ENCODE measurements at regions of chr4 and their contacts with region 1.

Region 1: GRCh38 chr4:75555294-75556164 is at the start of gene ODAPH:
- DNase-seq: no peak
- H3K4me3 ChIP-seq: no peak within 1 kb of the TSS
- H3K27ac ChIP-seq: no peak within 1 kb of the TSS
- H3K4me1 ChIP-seq: no peaks in the 10 kb centered on the region
- H3K27me3 ChIP-seq: no peaks in the 10 kb centered on the region
- CTCF ChIP-seq: no peak
- EP300 ChIP-seq: no peak
- POLR2A ChIP-seq: no peak
- total RNA-seq, gene ODAPH: not detected

Region 2: DNA sequence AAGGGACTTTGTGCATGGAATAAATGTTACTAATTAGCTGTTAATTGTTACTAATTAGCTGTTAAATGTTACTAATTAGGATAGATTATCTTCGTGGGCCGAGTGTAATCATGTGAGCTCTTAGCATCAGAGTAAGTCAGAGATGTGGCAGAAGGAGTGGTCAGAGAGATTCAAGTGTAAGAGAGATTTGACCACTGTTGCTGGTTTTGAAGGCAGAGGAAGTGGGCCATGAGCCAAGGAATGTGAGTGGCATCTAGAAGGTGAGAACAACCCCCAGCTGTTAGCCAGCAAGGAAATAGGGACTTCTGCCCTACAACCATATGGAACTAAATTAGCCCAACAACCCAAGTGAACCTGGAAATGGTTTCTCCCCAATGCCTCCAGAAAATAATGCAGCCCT is 28.5 kb after region 1 on chr4:
- intact Hi-C with region 1: loop called in 1 of 4 experiments (anchors 1 kb)
- DNase-seq: no peak
- H3K4me3 ChIP-seq: no peak overlapping the region
- H3K27ac ChIP-seq: no peak overlapping the region
- H3K4me1 ChIP-seq: no peaks in the 10 kb centered on the region
- H3K27me3 ChIP-seq: no peaks in the 10 kb centered on the region
- CTCF ChIP-seq: no peak
- EP300 ChIP-seq: no peak
- POLR2A ChIP-seq: no peak

Region 3: GRCh38 chr4:75715105-75715799 is 159.7 kb after region 1 on chr4:
- intact Hi-C with region 1: no loop called
- DNase-seq: peak in 1 of 5 donors; percentile 15
- H3K4me3 ChIP-seq: no peak overlapping the region
- H3K27ac ChIP-seq: no peak overlapping the region
- H3K4me1 ChIP-seq: peaks cover 7% of the 10 kb centered on the region
- H3K27me3 ChIP-seq: no peaks in the 10 kb centered on the region
- CTCF ChIP-seq: no peak
- EP300 ChIP-seq: no peak
- POLR2A ChIP-seq: no peak